ENCODE measurements at regions of chr3 and their contacts with region 1.

Region 1: GRCh38 chr3:38084334-38085310 is 45.6 kb downstream of the DLEC1 start:
- DNase-seq: no peak
- H3K4me3 Mint-ChIP-seq: no peak overlapping the region
- H3K27ac Mint-ChIP-seq: peak overlapping the region; percentile 59
- H3K4me1 Mint-ChIP-seq: no peaks in the 10 kb centered on the region
- H3K27me3 Mint-ChIP-seq: no peaks in the 10 kb centered on the region

Region 2: GRCh38 chr3:37620071-37620635 is 464.5 kb before region 1 on chr3:
- intact Hi-C with region 1: no loop called
- DNase-seq: no peak
- H3K4me3 Mint-ChIP-seq: no peak overlapping the region
- H3K27ac Mint-ChIP-seq: no peak overlapping the region
- H3K4me1 Mint-ChIP-seq: peaks cover 10% of the 10 kb centered on the region
- H3K27me3 Mint-ChIP-seq: peaks cover 2% of the 10 kb centered on the region

Region 3: DNA sequence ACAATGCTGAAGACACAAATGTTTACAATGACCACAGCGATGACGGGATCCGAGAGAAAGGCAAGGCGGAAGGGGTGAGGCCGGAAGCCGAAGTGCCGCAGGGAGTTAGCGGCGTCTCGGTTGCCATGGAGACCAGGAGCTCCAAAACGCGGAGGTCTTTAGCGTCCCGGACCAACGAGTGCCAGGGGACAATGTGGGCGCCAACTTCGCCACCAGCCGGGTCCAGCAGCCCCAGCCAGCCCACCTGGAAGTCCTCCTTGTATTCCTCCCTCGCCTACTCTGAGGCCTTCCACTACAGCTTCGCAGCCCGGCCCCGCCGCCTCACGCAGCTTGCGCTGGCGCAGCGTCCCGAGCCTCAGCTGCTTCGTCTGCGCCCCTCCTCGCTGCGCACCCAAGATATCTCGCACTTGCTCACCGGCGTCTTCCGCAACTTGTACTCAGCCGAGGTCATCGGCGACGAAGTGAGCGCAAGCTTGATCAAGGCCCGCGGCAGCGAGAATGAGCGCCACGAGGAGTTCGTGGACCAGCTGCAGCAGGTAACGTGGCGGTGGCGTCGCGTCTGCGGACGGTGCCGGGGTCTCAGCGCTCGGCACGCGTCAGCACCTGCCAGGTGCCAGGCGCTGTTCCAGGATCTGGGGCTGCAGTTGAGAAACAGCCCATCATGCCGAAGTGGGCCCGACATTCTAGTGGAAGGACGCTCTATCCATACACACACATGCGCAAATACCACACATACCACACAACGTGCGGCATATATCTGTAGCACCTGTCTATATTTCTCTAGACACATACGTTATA is 45.3 kb before region 1 on chr3 and contains the start of gene DLEC1:
- intact Hi-C with region 1: loop called (anchors 2 kb)
- DNase-seq: peak; percentile 84
- H3K4me3 Mint-ChIP-seq: peak within 1 kb of the TSS; percentile 75
- H3K27ac Mint-ChIP-seq: peak within 1 kb of the TSS; percentile 93
- H3K4me1 Mint-ChIP-seq: peaks cover 36% of the 10 kb centered on the region
- H3K27me3 Mint-ChIP-seq: peaks cover 7% of the 10 kb centered on the region
- total RNA-seq, gene DLEC1: 0.10 and 0.12 TPM in 2 replicates

Region 4: GRCh38 chr3:38907426-38907825 is 822.8 kb after region 1 on chr3:
- intact Hi-C with region 1: no loop called
- DNase-seq: no peak
- H3K4me3 Mint-ChIP-seq: no peak overlapping the region
- H3K27ac Mint-ChIP-seq: no peak overlapping the region
- H3K4me1 Mint-ChIP-seq: no peaks in the 10 kb centered on the region
- H3K27me3 Mint-ChIP-seq: no peaks in the 10 kb centered on the region

Measured in activated T-helper 1 cell treated with anti-CD3 and anti-CD28 coated beads, Interleukin-12 subunit alpha, Interleukin-12 subunit beta, Interleukin-2, Interleukin-4 antibody, amounts not matched to agents 30 ng/mL and 10 ng/mL and 1 ng/mL, durations not matched to agents 14 hours and 24 hours and 36 hours (primary cell).